HEK293 (cell line): ENCODE measurements at regions of chr5 and their contacts with region 1.

Region 1: DNA sequence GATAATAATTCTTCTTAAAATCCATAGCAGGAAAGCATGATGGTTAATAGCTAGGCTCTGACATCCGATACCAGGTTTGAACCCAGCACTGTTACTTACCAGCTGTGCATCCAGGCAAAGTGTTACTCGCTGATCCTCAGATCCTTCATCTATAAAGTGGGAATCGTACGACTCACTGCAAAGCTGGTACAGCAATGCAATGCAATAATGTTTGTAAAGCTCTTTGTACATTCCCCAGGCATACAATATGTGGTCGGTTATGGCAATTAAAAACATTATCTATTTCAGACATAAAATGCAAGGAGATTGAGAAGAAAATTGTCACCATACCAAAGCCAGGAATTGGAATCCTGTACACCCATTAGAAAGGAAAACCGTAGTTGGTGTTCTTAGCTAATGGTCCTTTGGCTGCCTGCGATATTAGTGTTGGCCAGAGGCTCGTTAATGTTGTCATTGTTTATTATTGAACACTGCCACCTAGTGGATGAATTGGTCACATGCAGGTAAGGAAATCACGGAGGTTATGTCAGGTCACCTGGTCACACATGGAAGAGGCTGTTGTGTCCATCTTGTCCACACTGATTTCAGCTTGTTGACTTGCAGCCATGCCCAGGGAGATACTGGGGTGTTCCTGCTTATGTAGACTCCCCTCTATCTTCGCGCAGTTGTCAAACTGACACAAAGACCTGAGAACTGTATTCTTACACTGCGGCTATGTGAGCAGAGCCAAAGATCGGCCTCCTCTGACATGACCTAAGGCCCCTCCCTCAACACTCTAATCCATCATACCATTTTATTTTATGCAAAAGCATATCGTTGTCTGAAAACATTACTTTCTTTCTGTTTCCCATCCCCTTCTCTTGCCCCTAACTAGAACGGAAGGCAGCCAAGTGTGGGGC is 87.5 kb upstream of the PPP2R2B start:
- H3K4me3 ChIP-seq: no peak overlapping the region
- H3K27ac ChIP-seq: no peak overlapping the region
- H3K4me1 ChIP-seq: no peaks in the 10 kb centered on the region
- CTCF ChIP-seq: peak; percentile 68

Region 2: DNA sequence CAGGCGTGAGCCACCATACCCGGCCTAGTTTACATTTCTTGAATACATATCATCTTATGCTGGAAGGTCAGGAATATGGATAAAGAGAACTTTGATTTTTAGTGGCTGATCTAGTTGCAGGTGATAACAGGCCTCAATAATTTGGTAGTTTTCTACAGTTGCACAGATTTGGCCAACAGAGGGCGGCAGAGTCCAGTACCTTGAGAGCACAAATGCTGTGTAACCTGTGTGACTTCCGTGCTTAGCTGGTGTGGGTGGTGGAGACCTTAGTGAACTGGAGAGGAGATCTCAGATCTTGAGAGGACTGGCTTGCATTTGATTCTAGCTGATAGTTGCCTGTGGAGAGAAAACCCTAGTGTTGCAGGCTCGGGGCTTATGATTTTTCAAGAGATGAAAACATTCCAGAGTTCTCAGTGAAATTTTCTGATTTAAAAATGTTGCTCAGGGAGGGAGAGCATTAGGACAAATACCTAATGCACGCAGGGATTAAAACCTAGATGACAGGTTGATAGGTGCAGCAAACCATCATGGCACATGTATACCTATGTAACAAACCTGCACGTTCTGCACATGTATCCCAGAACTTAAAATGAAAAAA is 432.7 kb before region 1 on chr5:
- CTCF ChIA-PET with region 1: interaction called, 115 read pairs
- POLR2A ChIA-PET with region 1: interaction called, 3 read pairs
- H3K4me3 ChIP-seq: no peak overlapping the region
- H3K27ac ChIP-seq: no peak overlapping the region
- H3K4me1 ChIP-seq: no peaks in the 10 kb centered on the region
- CTCF ChIP-seq: peak; percentile 70; the same call in 1 of the 2 replicates

Region 3: DNA sequence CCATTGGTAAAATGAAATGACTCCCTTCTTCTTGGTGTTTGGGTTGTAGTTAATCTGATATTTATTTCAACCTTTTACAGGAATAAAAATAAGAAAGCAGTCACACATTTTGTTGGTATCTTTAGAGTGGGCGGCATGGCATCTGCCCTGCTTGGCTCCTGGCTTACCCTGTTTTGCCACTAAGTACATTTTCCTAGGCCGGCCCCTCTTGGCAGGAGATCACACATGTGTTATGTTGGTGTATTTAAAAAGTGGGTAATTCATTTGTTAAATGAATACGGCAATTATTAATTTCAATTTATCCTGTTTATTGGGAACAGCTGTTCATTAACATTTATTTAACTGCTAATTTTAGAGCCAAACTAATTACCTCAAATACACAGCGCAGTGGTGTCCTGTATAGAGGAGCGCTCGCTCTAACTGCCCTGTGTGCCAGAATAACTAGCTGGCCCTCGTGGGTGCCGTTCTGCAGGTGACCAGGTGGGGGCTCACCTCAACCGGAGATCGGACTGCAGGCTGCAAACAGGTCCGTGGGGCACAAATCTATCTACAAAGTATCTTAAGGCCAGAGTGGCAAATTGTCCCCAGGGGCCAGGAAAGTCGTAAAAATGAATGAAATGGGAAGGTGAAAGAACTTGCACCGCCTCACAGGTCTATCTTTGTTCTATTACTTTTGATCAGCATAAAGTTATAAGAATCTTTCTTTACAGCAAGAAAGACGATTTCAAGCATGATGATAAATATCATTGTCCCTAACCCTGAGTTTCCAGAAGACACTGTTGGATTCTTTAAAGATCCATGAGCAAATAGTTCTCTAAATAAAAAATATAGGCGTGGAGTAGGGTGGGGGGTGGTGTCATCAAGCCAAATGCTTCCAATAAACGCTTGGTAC is 423.8 kb before region 1 on chr5:
- CTCF ChIA-PET with region 1: interaction called, 115 read pairs
- POLR2A ChIA-PET with region 1: no interaction called
- H3K4me3 ChIP-seq: no peak overlapping the region
- H3K27ac ChIP-seq: no peak overlapping the region
- H3K4me1 ChIP-seq: no peaks in the 10 kb centered on the region
- CTCF ChIP-seq: peak; percentile 69

Region 4: GRCh38 chr5:146565764-146566367 is 400.1 kb before region 1 on chr5:
- CTCF ChIA-PET with region 1: interaction called, 15 read pairs
- POLR2A ChIA-PET with region 1: no interaction called
- H3K4me3 ChIP-seq: no peak overlapping the region
- H3K27ac ChIP-seq: no peak overlapping the region
- H3K4me1 ChIP-seq: no peaks in the 10 kb centered on the region
- CTCF ChIP-seq: peak; percentile 46; the same call in 1 of the 2 replicates